ENCODE measurements at regions of chr15 and their contacts with region 1.

Region 1: DNA sequence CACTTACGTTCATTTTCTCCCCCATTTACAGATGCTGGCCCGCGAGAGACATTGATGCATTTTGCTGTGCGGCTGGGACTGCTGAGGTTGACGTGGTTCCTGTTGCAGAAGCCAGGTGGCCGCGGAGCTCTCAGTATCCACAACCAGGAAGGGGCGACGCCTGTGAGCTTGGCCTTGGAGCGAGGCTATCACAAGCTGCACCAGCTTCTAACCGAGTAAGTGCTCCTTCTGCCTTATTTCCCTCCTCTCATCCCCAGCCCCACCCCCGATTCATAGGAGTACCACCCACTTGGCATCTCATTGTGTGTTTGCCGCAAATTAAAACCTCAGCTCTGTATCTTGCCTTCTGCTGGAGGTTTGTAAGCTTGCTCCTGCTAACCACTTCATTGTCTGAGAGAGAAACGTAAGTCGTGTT is 163.3 kb downstream of the AKAP13 start:
- DNase-seq: peak; percentile 91
- ATAC-seq: peak; percentile 65

Region 2: DNA sequence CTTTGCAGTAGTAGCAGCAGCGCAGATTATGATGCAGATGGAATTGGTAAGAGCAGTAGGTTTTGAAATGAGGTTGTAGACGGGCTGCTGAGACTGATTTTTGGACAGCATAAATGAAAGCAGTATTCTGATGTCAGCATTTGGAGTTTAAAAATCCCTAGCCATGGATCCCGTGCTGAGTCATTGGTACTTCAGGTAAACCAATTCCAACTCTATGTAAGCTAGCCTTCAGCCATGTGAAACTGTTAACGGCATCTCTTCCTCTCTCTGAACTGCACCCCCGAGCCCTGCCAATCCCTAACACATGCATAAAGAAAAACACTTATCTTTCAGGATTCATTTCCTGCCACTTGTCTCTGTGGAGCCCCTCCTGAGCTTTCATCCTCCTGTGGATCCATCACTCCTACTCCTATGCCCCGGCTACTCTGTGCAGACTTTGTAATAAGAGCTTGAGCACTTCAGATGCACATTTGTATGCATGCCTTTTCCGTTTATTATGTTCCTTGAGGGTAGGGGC is 44.3 kb before region 1 on chr15:
- intact Hi-C with region 1: loop called (anchors 5 kb)
- DNase-seq: no peak
- ATAC-seq: no peak

Region 3: GRCh38 chr15:85840065-85840801 is 296.5 kb after region 1 on chr15:
- intact Hi-C with region 1: loop called (anchors 5 kb)
- DNase-seq: peak; percentile 93
- ATAC-seq: peak; percentile 94